ENCODE measurements at regions of chr6 and their contacts with region 1.

Region 1: GRCh38 chr6:26025894-26026832 is 61.1 kb upstream of the HFE start:
- DNase-seq: peak; percentile 86
- ATAC-seq: peak; percentile 35
- H3K4me3 Mint-ChIP-seq: peak overlapping the region; percentile 89
- H3K27ac Mint-ChIP-seq: peak overlapping the region; percentile 99
- H3K4me1 Mint-ChIP-seq: peaks cover 75% of the 10 kb centered on the region
- H3K27me3 Mint-ChIP-seq: no peaks in the 10 kb centered on the region

Region 2: DNA sequence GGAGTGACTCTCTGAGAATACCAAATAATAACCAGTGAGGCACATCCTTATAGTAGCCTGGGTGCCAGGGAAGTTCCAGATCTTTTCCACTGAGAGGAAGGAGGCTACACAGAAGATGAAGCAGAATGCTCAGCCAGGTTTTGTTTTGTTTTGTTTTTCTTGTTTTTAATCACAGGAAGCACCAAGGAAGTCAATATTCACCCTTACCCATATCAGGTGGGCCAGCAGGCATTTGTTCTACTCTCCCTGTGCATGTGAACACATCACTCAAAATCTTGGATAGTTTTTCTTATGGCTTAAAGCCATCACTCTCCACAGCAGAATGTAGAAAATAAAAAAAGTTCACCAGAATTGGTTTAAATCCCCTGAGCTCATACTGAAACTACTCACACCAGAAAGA is 204.8 kb before region 1 on chr6:
- POLR2A ChIA-PET with region 1: no interaction called
- DNase-seq: no peak
- ATAC-seq: no peak
- H3K4me3 Mint-ChIP-seq: no peak overlapping the region
- H3K27ac Mint-ChIP-seq: no peak overlapping the region
- H3K4me1 Mint-ChIP-seq: no peaks in the 10 kb centered on the region
- H3K27me3 Mint-ChIP-seq: peaks cover 40% of the 10 kb centered on the region

Region 3: DNA sequence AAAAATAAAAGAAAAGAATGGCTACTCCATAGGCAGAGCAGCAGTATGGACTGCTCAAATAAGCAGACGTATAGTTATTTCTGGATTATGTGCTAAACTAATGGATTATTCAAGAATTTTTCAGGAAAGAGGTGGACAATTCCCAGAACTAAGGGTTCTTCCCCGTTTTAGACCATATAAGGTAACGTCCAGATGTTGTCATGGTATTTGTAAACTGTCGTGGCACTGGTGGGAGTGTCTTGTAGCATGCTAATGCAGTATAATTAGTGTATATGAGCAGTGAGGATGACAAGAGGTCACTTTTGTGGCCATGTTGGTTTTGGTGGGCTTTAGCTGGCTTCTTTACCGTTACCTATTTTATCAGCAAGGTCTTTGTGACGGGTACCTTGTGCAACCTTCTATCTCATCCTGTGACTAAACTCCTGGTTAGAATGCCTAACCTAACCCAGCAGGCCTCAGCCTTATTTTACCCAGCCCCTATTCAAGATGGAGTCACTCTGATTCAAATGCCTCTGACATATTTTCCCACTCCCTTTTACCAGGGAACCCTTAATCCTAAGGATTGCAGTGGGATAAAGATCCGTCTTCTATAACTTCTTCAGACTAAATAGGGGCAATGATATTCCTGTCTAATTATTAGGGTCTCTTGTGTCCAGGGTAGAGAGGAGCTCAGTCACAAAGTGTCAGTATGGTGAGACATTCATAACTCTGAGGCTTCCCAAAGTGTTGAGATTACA is 74.7 kb before region 1 on chr6:
- POLR2A ChIA-PET with region 1: no interaction called
- DNase-seq: no peak
- ATAC-seq: no peak
- H3K4me3 Mint-ChIP-seq: no peak overlapping the region
- H3K27ac Mint-ChIP-seq: no peak overlapping the region
- H3K4me1 Mint-ChIP-seq: peaks cover 4% of the 10 kb centered on the region
- H3K27me3 Mint-ChIP-seq: peaks cover 10% of the 10 kb centered on the region

Region 4: GRCh38 chr6:25962149-25963127 is 63.7 kb before region 1 on chr6 and contains the start of gene TRIM38:
- POLR2A ChIA-PET with region 1: interaction called, 17 read pairs
- DNase-seq: peak; percentile 51
- ATAC-seq: peak; percentile 91
- H3K4me3 Mint-ChIP-seq: peak within 1 kb of the TSS; percentile 98
- H3K27ac Mint-ChIP-seq: peak within 1 kb of the TSS; percentile 98
- H3K4me1 Mint-ChIP-seq: peaks cover 52% of the 10 kb centered on the region
- H3K27me3 Mint-ChIP-seq: no peaks in the 10 kb centered on the region
- total RNA-seq, gene TRIM38: 29.1 TPM

Region 5: DNA sequence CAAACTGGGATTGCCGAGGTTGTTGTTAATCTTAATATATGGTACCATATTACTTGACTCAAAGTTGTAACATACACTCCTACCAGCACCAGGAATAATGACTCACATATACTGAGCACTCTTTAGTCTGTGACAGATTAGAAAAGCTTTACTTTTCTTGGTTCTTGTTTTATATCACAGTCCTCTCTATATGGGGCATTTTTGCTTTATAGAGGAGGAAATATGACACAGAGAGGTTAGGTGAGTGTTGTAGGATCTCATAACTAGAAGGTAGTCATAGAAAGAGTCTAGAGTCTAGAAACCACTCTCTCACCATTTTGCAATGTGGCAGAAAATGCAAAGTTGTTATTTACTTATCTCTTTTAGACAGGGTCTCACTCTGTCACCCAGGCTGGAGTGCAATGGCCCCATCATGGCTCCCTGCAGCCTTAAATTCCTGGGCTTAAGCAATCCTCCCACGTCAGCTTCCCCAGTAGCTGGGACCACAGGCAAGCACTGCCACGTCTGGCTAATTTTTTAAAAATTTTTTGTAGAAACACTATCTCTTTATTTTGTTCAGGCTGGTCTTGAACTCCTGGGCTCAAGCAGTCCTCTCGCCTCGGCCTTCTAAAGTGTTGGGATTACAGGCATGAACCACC is 50.1 kb before region 1 on chr6:
- POLR2A ChIA-PET with region 1: no interaction called
- DNase-seq: no peak
- ATAC-seq: no peak
- H3K4me3 Mint-ChIP-seq: no peak overlapping the region
- H3K27ac Mint-ChIP-seq: no peak overlapping the region
- H3K4me1 Mint-ChIP-seq: peaks cover 14% of the 10 kb centered on the region
- H3K27me3 Mint-ChIP-seq: no peaks in the 10 kb centered on the region

Region 6: DNA sequence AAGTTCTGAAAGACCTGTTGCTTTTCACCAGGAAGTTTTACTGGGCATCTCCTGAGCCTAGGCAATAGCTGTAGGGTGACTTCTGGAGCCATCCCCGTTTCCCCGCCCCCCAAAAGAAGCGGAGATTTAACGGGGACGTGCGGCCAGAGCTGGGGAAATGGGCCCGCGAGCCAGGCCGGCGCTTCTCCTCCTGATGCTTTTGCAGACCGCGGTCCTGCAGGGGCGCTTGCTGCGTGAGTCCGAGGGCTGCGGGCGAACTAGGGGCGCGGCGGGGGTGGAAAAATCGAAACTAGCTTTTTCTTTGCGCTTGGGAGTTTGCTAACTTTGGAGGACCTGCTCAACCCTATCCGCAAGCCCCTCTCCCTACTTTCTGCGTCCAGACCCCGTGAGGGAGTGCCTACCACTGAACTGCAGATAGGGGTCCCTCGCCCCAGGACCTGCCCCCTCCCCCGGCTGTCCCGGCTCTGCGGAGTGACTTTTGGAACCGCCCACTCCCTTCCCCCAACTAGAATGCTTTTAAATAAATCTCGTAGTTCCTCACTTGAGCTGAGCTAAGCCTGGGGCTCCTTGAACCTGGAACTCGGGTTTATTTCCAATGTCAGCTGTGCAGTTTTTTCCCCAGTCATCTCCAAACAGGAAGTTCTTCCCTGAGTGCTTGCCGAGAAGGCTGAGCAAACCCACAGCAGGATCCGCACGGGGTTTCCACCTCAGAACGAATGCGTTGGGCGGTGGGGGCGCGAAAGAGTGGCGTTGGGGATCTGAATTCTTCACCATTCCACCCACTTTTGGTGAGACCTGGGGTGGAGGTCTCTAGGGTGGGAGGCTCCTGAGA is 61.3 kb after region 1 on chr6 and contains the start of gene HFE:
- POLR2A ChIA-PET with region 1: interaction called, 21 read pairs
- DNase-seq: peak; percentile 65
- ATAC-seq: peak; percentile 9
- H3K4me3 Mint-ChIP-seq: peak within 1 kb of the TSS; percentile 86
- H3K27ac Mint-ChIP-seq: peak within 1 kb of the TSS; percentile 81
- H3K4me1 Mint-ChIP-seq: peaks cover 50% of the 10 kb centered on the region
- H3K27me3 Mint-ChIP-seq: no peaks in the 10 kb centered on the region
- total RNA-seq, gene HFE: 5.0 to 7.2 TPM

Region 7: DNA sequence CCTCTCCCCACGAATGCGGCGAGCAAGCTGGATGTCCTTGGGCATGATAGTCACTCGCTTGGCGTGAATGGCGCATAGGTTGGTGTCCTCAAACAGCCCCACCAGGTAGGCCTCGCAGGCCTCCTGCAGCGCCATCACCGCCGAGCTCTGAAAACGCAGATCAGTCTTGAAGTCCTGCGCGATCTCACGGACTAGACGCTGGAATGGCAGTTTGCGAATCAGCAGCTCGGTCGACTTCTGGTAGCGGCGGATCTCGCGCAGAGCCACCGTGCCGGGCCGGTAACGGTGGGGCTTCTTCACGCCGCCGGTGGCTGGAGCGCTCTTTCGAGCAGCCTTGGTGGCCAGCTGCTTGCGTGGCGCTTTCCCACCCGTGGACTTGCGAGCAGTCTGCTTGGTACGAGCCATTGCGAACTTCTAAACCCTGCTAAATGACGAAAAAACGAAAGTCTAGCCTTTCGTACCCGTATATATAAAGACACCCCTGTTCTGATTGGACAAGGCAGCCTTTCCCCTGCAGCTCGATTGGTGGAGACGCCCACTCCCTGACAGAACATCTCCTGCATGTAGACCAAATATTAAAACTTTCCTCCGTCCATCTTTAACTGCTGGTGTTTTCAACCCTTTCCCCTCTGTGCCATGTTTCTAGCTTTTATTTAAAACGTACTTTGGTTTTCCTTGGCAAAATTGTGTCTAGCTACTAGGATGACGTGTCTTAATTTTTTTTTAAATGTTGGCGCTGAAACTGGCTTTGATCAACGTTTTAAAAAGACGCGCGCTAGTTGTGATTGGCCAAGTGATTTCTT is 170.9 kb after region 1 on chr6:
- POLR2A ChIA-PET with region 1: interaction called, 291 read pairs
- DNase-seq: peak; percentile 83
- ATAC-seq: peak; percentile 44
- H3K4me3 Mint-ChIP-seq: peak overlapping the region; percentile 87
- H3K27ac Mint-ChIP-seq: peak overlapping the region; percentile 96
- H3K4me1 Mint-ChIP-seq: peaks cover 48% of the 10 kb centered on the region
- H3K27me3 Mint-ChIP-seq: no peaks in the 10 kb centered on the region

Region 8: DNA sequence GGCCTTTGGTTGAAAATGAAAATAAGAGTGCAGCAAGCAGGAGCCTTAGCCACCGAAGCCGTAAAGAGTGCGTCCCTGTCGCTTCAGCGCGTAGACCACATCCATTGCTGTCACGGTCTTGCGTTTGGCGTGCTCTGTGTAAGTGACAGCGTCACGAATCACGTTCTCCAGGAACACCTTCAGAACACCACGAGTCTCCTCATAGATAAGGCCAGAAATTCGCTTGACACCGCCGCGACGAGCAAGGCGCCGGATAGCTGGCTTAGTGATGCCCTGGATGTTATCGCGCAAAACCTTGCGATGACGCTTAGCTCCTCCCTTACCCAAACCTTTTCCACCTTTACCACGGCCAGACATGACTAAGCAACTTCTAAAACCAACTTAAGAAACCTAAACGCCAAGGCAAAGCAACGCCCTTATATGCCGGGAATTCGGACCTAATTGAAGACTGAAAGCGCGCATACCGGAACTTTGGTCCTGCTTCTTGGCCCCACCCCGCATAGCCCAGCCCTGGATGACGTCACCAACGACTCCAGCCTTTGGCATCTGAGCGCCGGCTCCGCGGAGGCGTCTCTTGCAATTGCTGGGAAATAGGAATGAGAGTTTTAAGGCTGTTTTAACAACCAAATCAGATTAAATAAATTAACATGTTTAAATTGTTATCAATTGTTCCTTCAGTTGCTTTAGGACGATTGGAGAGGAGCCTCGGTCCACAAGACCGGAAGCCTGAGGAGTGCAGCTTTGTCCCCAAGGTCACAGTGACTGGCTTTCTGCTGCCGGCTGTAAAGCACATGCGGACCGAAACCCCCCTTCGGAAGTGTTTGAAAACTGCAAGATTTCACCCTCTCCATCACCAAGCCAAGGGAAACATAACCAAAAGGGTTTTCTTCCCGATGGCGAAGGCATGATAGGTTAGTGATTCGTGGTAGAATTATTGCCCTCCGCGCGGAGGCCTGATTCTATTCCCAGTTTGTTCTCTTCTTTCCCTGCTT is 259.3 kb after region 1 on chr6:
- POLR2A ChIA-PET with region 1: interaction called, 11 read pairs
- DNase-seq: peak; percentile 87
- ATAC-seq: peak; percentile 79
- H3K4me3 Mint-ChIP-seq: peak overlapping the region; percentile 72
- H3K27ac Mint-ChIP-seq: peak overlapping the region; percentile 92
- H3K4me1 Mint-ChIP-seq: peaks cover 37% of the 10 kb centered on the region
- H3K27me3 Mint-ChIP-seq: peaks cover 3% of the 10 kb centered on the region

Region 9: DNA sequence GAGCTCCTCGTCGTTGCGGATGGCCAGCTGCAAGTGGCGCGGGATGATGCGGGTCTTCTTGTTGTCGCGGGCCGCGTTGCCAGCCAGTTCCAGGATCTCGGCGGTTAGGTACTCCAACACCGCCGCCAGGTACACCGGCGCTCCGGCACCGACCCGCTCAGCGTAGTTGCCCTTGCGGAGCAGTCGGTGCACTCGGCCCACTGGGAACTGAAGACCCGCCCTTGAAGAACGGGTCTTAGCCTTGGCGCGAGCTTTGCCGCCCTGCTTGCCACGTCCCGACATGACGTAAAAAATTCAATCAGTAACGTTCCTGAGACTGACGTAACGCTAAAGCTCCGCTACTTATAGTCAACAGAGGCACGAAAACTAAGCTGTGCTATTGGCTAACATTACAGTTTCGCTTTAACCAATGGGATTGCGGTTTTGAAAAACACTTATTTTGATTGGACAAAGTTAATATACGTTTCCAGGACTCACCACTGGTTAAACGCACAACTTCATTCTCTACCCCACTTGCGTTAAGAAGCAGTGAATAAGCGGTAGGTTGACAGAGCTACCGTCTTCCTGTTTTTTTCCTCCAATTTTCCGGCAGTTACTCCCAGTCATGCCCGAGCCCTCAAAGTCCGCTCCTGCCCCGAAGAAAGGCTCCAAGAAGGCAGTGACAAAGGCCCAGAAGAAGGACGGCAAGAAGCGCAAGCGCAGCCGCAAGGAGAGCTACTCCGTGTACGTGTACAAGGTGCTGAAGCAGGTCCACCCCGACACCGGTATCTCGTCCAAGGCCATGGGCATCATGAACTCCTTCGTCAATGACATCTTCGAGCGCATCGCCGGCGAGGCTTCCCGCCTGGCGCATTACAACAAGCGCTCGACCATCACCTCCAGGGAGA is 1812.1 kb after region 1 on chr6:
- POLR2A ChIA-PET with region 1: interaction called, 39 read pairs
- DNase-seq: peak; percentile 84
- ATAC-seq: peak; percentile 74
- H3K4me3 Mint-ChIP-seq: no peak overlapping the region
- H3K27ac Mint-ChIP-seq: no peak overlapping the region
- H3K4me1 Mint-ChIP-seq: peaks cover 26% of the 10 kb centered on the region
- H3K27me3 Mint-ChIP-seq: peaks cover 2% of the 10 kb centered on the region